GM12878 (cell line): ENCODE measurements at regions of chr6 and their contacts with region 1.

Region 1: DNA sequence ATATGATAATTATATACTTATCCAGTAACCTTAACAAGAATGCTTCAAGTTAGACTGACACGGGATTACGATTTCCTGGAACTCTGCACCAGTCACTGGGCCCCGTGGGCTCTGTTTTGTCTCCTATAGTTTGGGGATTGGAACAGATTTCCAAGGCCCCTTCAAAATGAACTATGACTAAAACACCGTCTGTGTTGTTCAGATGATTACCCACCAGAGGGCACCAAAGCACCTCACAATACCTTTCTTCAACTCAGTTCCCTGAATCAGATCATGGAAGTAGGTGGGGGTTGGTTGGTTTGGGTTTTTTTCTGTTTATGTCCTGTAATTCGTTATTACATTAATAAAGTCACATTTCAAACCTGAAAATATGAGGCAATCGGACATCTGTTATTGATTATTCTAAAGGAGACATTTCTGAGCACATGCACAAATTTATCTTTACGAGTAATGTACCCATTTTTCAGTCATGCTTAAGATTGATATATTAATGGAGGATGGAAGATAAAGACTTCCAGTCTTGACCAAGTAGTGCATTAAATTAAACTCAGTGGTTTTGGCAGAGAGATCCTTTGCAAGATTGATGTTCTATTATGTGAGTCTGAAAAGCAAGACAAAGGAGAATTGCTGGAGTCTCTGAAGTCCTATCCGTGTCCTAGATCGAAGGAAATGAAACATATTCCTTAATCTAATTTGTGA is 112.0 kb upstream of the COL21A1 start:
- DNase-seq: peak; percentile 26
- ATAC-seq: peak; percentile 94
- H3K4me3 ChIP-seq: no peak overlapping the region
- H3K27ac ChIP-seq: no peak overlapping the region
- H3K4me1 ChIP-seq: no peaks in the 10 kb centered on the region
- H3K27me3 ChIP-seq: no peaks in the 10 kb centered on the region
- CTCF ChIP-seq: peak; percentile 65 to 82 (median 77); a peak in 5 of 6 replicates
- EP300 ChIP-seq: no peak
- POLR2A ChIP-seq: no peak
- RAD21 ChIP-seq: peak; percentile 99

Region 2: GRCh38 chr6:56072856-56073255 is 286.5 kb before region 1 on chr6:
- CTCF ChIA-PET with region 1: no interaction called
- POLR2A ChIA-PET with region 1: no interaction called
- RAD21 ChIA-PET with region 1: no interaction called
- SMC1A ChIA-PET with region 1: no interaction called
- in situ Hi-C with region 1: no loop called
- intact Hi-C with region 1: no loop called
- DNase-seq: no peak
- ATAC-seq: no peak
- H3K4me3 ChIP-seq: no peak overlapping the region
- H3K27ac ChIP-seq: no peak overlapping the region
- H3K4me1 ChIP-seq: no peaks in the 10 kb centered on the region
- H3K27me3 ChIP-seq: no peaks in the 10 kb centered on the region
- CTCF ChIP-seq: no peak
- EP300 ChIP-seq: no peak
- POLR2A ChIP-seq: no peak
- RAD21 ChIP-seq: no peak

Region 3: DNA sequence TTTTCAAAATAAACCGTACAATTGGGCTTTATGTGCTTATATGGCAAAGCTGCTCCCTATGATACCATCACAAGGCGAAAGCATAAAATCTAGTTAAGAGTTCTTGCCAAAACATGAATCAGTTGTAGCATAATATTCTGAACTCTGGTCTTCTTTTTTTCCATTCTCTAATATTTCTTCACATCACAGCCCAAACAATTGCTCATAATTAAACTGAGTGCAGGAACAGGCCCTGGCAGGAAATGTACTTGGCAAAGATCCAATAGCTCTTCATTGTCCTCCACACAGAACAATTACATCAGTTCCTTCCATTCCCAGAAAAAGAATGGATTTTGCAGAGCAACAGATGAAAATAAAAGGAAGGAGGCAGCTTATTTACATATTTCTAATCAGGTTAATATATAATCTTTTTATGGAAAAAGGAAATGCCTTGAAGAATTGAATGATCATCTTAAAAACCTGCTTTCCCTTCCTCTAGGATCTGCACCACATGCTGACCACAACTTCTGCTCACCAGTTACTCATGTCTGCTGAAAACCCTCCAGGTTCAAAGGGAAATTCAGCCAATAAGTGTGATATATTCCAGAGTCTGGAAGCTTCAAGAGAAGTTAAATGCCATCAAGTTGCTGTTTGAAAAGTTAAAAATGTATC is 11.3 kb after region 1 on chr6:
- CTCF ChIA-PET with region 1: interaction called, 12 read pairs
- POLR2A ChIA-PET with region 1: no interaction called
- RAD21 ChIA-PET with region 1: interaction called, 6 read pairs
- SMC1A ChIA-PET with region 1: interaction called, 5 read pairs
- in situ Hi-C with region 1: no loop called
- intact Hi-C with region 1: no loop called
- DNase-seq: peak; percentile 34
- ATAC-seq: peak; percentile 88
- H3K4me3 ChIP-seq: no peak overlapping the region
- H3K27ac ChIP-seq: no peak overlapping the region
- H3K4me1 ChIP-seq: peaks cover 11% of the 10 kb centered on the region
- H3K27me3 ChIP-seq: no peaks in the 10 kb centered on the region
- CTCF ChIP-seq: no peak
- EP300 ChIP-seq: peak; percentile 24 to 27; a peak in 1 of 4 replicates
- POLR2A ChIP-seq: no peak
- RAD21 ChIP-seq: no peak

Region 4: DNA sequence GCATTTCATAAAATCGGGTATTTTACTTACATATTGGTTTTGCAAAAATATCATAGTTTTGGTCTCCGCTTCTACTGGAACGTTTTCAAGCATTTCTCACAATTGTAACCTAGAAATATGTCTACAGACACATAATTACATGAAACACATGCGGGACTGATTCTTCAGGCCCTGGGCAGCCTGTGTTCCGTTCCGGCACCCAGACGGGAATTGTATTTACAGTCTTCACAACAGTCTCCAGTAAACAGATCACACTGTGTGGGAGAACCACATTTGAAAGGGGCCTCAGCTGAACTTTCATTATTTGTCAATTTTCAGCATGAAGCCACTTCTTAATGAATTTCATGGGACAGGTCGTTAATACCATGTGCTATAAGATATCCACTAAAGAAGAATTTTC is 86.5 kb after region 1 on chr6:
- CTCF ChIA-PET with region 1: interaction called, 3 read pairs
- POLR2A ChIA-PET with region 1: no interaction called
- RAD21 ChIA-PET with region 1: no interaction called
- SMC1A ChIA-PET with region 1: no interaction called
- in situ Hi-C with region 1: no loop called
- intact Hi-C with region 1: loop called (anchors 5 kb)
- DNase-seq: no peak
- ATAC-seq: no peak
- H3K4me3 ChIP-seq: no peak overlapping the region
- H3K27ac ChIP-seq: no peak overlapping the region
- H3K4me1 ChIP-seq: no peaks in the 10 kb centered on the region
- H3K27me3 ChIP-seq: no peaks in the 10 kb centered on the region
- CTCF ChIP-seq: no peak
- EP300 ChIP-seq: no peak
- POLR2A ChIP-seq: no peak
- RAD21 ChIP-seq: no peak

Region 5: DNA sequence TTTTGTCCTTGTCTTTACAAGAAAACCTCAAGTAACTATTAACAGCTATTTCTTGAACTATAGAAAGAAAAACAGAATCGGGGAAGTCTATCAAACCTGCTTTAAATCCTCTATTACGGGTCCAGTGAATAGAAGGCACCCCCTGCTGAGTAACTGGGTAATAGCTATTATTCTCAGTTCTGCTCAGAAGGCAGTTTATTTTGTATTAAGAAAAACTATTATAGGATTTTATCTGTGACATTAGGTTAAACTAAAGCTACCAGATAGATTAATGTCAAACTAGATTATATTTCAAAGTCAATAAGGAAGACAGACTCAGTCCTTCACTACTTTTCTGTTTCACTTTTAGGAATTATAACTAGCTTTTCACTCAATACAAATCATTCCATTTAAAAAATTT is 189.7 kb after region 1 on chr6:
- CTCF ChIA-PET with region 1: interaction called, 11 read pairs
- POLR2A ChIA-PET with region 1: no interaction called
- RAD21 ChIA-PET with region 1: interaction called, 4 read pairs
- SMC1A ChIA-PET with region 1: interaction called, 4 read pairs
- in situ Hi-C with region 1: no loop called
- intact Hi-C with region 1: no loop called
- DNase-seq: no peak
- ATAC-seq: peak; percentile 46; the same call in 1 of the 3 replicates
- H3K4me3 ChIP-seq: no peak overlapping the region
- H3K27ac ChIP-seq: no peak overlapping the region
- H3K4me1 ChIP-seq: peaks cover 9% of the 10 kb centered on the region; the same call in 1 of the 2 replicates
- H3K27me3 ChIP-seq: no peaks in the 10 kb centered on the region
- CTCF ChIP-seq: peak; percentile 3 to 26 (median 24); a peak in 2 of 6 replicates
- EP300 ChIP-seq: no peak
- POLR2A ChIP-seq: no peak
- RAD21 ChIP-seq: peak; percentile 47

Region 6: GRCh38 chr6:56570413-56571359 is 211.3 kb after region 1 on chr6:
- CTCF ChIA-PET with region 1: interaction called, 19 read pairs
- POLR2A ChIA-PET with region 1: no interaction called
- RAD21 ChIA-PET with region 1: interaction called, 7 read pairs
- SMC1A ChIA-PET with region 1: interaction called, 12 read pairs
- in situ Hi-C with region 1: no loop called
- intact Hi-C with region 1: loop called (anchors 1 kb)
- DNase-seq: no peak
- ATAC-seq: peak; percentile 88
- H3K4me3 ChIP-seq: no peak overlapping the region
- H3K27ac ChIP-seq: no peak overlapping the region
- H3K4me1 ChIP-seq: no peaks in the 10 kb centered on the region
- H3K27me3 ChIP-seq: no peaks in the 10 kb centered on the region
- CTCF ChIP-seq: peak; percentile 50 to 51 (median 51)
- EP300 ChIP-seq: no peak
- POLR2A ChIP-seq: no peak
- RAD21 ChIP-seq: 0 out of 2 replicates have a peak, but pooled peaks have one; percentile 30

Region 7: DNA sequence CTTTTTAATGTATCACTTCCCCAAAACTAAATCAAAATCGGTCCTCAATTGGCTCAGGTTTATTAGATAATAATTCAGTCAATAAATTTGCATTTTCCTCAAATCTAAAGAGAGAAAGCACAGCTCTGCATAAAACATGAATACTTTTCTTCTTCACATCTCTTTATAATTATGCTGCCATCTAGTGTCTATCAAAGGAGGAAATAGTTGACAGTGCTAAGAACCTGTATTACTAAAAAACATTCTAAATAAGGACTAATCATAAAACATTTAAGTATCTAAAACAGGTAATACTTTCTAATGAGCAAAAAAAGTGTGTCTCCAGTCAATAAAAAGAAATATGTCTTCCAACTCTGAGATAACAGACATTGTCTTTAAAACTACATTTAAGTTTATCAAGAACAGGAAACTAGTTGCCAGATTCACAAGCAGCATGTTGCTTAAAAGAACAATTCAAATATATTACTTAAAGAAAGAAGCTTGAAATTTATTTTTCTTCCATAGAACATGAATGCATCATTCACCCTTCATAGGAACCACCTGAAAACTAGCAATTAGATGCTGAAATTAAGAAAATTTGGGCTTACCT is 339.8 kb after region 1 on chr6:
- CTCF ChIA-PET with region 1: no interaction called
- POLR2A ChIA-PET with region 1: no interaction called
- RAD21 ChIA-PET with region 1: no interaction called
- SMC1A ChIA-PET with region 1: no interaction called
- in situ Hi-C with region 1: loop called (anchors 10 kb)
- intact Hi-C with region 1: loop called (anchors 10 kb)
- DNase-seq: no peak
- ATAC-seq: peak; percentile 69
- H3K4me3 ChIP-seq: no peak overlapping the region
- H3K27ac ChIP-seq: no peak overlapping the region
- H3K4me1 ChIP-seq: no peaks in the 10 kb centered on the region
- H3K27me3 ChIP-seq: no peaks in the 10 kb centered on the region
- CTCF ChIP-seq: peak; percentile 26 to 43 (median 26); a peak in 3 of 6 replicates
- EP300 ChIP-seq: no peak
- POLR2A ChIP-seq: no peak
- RAD21 ChIP-seq: peak; percentile 45; the same call in 1 of the 2 replicates

Region 8: DNA sequence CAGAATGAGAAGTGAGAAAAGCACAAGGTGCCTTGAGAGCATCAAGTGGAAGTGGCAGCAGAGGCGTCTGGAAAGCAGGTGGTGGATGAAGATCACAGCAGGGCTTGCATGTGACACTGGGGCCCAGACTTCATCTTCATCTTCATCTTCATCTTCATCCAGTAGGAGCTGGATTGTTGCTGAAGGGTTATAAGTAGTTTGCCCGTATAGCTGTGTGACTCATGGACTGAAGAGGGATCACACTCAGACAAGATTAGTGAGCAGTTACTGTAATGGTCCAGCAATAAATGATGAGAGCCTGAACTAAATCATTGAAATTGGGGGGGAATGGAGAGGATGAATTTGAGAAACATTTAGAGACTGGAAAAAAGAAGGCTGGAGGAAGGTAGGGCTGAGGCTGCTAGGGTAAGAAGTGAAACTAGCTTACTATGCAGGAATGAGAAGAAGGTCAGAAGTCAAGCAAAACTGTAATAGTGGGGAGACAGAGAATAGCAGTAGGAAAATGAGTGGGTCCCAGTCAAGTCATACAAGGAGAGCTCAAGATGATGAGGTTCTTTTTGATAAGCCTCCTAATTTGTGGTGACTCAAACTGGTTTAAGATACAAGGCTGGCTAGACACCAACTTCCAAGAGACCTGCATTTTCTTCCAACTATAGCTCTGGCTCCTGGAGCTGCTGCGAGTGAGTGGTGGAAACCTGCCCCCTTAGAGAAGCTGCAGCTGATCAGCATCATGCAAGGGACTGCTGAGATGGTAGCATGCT is 503.2 kb after region 1 on chr6:
- CTCF ChIA-PET with region 1: no interaction called
- POLR2A ChIA-PET with region 1: no interaction called
- RAD21 ChIA-PET with region 1: no interaction called
- SMC1A ChIA-PET with region 1: no interaction called
- in situ Hi-C with region 1: loop called (anchors 10 kb)
- intact Hi-C with region 1: no loop called
- DNase-seq: no peak
- ATAC-seq: peak; percentile 57
- H3K4me3 ChIP-seq: no peak overlapping the region
- H3K27ac ChIP-seq: no peak overlapping the region
- H3K4me1 ChIP-seq: peaks cover 17% of the 10 kb centered on the region
- H3K27me3 ChIP-seq: no peaks in the 10 kb centered on the region
- CTCF ChIP-seq: no peak
- EP300 ChIP-seq: no peak
- POLR2A ChIP-seq: no peak
- RAD21 ChIP-seq: no peak